BJ (cell line): ENCODE measurements at regions of chr5 and their contacts with region 1.

Region 1: GRCh38 chr5:171893290-171893886 is 107.8 kb downstream of the SMIM23 start:
- DNase-seq: peak; percentile 30
- H3K4me3 ChIP-seq: no peak overlapping the region
- H3K27me3 ChIP-seq: no peaks in the 10 kb centered on the region
- CTCF ChIP-seq: no peak

Region 2: DNA sequence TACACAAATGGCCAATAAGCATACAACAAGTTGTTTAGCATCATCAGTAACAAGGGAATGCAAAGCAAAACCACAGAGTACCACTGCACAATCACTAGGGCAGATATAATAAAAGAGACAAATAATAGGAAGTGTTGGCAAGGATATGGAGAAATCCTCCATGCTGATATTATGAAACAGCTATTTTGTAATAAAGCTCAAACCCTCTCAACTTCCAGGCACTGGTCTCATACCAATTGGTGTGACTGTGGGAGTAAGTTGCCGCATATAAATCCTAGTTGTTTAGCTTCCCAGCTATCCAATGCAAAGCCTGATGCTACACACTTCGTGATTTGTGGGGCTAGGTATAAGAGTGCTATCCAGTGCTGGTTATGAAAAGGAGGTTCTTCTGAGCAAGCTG is 19.2 kb before region 1 on chr5:
- CTCF ChIA-PET with region 1: no interaction called
- POLR2A ChIA-PET with region 1: no interaction called
- DNase-seq: peak; percentile 13
- H3K4me3 ChIP-seq: no peak overlapping the region
- H3K27me3 ChIP-seq: no peaks in the 10 kb centered on the region
- CTCF ChIP-seq: no peak

Region 3: DNA sequence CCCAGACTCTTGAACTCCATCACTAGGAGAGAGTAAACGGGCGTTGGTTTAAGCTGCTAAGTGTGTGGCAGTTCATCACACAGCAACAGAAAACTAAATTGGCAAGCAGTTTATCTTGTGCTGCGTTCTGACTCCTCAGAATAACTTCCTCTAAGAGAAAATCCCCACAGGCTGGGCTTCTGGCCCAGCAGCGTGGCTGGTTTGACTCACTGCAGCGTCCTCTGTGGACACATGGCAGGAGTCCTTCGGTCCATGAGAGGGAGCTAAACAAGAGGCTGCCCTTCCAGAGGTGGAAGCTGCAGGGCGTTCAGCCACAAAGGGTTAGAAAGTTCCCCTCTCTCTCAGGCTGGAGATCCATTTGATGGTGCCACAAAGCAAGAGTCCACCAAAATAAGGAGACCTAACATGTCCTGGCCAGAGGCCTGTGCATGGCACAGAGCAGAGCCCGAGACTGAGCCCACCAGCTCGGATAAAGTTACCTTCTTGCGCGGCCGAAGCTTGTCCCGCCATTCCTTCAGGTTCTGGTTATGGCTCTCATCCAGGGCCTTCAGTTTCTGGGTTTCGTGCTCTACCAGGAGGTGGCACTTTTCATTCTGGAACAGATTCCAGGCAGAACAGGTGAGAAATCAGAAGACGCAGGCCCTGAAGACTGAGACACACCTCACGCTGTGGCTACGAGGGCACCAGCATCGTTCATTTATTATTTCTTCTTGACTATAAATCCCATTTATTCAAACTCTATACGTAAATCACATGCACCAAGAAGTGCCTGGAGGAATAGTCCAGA is 159.3 kb after region 1 on chr5:
- CTCF ChIA-PET with region 1: no interaction called
- POLR2A ChIA-PET with region 1: interaction called, 10 read pairs
- DNase-seq: no peak
- H3K4me3 ChIP-seq: no peak overlapping the region
- H3K27me3 ChIP-seq: no peaks in the 10 kb centered on the region
- CTCF ChIP-seq: no peak